ENCODE measurements at regions of chr13 and their contacts with region 1.

Region 1: DNA sequence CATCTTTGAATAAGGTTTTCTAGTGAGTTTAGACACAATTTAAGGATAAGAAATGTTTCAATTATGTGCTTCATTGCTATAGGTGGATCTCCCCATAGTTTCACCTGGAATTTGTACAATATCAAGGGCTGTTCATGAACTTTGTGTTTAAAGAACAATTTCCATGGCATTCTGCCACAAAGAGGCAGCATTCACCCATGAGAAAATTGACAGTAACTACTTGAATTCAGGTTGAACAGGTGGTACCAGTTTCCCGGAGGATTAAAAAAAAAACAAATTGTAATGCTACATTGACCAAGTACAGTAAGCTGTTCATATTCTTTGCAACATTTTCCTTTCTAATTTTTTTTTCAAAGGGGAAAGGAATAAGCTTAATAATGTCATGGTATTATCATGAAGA is 9.1 kb downstream of the SLITRK5 start:
- DNase-seq: peak; percentile 76
- ATAC-seq: no peak; the same call in 1 of the 2 replicates
- H3K4me3 ChIP-seq: no peak overlapping the region
- H3K27ac ChIP-seq: no peak overlapping the region
- H3K4me1 ChIP-seq: peaks cover 12% of the 10 kb centered on the region
- H3K27me3 ChIP-seq: no peaks in the 10 kb centered on the region
- CTCF ChIP-seq: peak; percentile 56

Region 2: DNA sequence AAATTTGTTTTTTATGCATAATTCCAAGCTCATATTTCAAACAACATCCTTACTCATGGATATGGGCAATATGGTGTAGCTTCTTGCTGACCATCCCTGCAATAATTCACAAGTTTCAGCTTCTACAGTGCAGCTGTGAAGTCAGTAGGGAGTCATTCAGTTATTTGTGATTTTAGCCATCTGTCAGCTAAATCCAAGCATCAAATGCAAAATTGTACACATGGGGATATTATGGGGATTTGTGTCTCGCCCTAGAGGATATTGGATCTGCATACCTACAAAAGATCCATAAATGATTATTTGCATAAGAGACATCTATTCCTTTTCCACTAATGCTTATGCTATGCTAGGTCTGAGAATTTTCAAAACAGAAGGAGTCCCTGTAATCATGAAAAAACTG is 227.1 kb before region 1 on chr13:
- CTCF ChIA-PET with region 1: no interaction called
- POLR2A ChIA-PET with region 1: no interaction called
- intact Hi-C with region 1: no loop called
- DNase-seq: no peak
- ATAC-seq: no peak
- H3K4me3 ChIP-seq: no peak overlapping the region
- H3K27ac ChIP-seq: no peak overlapping the region
- H3K4me1 ChIP-seq: no peaks in the 10 kb centered on the region
- H3K27me3 ChIP-seq: no peaks in the 10 kb centered on the region
- CTCF ChIP-seq: no peak

Region 3: DNA sequence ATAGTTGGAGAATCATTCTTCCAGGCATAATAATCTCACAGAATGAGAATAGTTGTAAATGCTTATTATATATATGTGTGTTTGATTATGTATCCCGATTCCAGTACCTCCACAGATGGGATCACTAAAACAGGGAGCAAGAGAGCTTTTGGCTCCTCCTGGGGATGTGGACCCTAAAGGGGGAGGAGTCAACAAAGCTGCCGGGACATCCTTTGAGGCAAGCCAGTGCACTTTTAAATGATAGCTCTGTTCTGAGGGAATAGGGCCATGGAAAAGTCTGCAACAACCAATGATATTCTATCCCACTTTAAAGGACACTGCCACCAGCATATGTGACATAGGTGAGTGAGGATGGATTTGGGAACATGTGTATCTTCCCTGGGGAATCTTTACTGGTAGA is 31.7 kb after region 1 on chr13:
- CTCF ChIA-PET with region 1: no interaction called
- POLR2A ChIA-PET with region 1: no interaction called
- intact Hi-C with region 1: no loop called
- DNase-seq: no peak
- ATAC-seq: no peak
- H3K4me3 ChIP-seq: no peak overlapping the region
- H3K27ac ChIP-seq: no peak overlapping the region
- H3K4me1 ChIP-seq: no peaks in the 10 kb centered on the region
- H3K27me3 ChIP-seq: no peaks in the 10 kb centered on the region
- CTCF ChIP-seq: no peak

Region 4: GRCh38 chr13:87999791-88000190 is 319.5 kb after region 1 on chr13:
- CTCF ChIA-PET with region 1: no interaction called
- POLR2A ChIA-PET with region 1: no interaction called
- intact Hi-C with region 1: loop called (anchors 10 kb)
- DNase-seq: no peak
- ATAC-seq: peak; percentile 31; the same call in 1 of the 2 replicates
- H3K4me3 ChIP-seq: no peak overlapping the region
- H3K27ac ChIP-seq: no peak overlapping the region
- H3K4me1 ChIP-seq: no peaks in the 10 kb centered on the region
- H3K27me3 ChIP-seq: no peaks in the 10 kb centered on the region
- CTCF ChIP-seq: no peak

Region 5: DNA sequence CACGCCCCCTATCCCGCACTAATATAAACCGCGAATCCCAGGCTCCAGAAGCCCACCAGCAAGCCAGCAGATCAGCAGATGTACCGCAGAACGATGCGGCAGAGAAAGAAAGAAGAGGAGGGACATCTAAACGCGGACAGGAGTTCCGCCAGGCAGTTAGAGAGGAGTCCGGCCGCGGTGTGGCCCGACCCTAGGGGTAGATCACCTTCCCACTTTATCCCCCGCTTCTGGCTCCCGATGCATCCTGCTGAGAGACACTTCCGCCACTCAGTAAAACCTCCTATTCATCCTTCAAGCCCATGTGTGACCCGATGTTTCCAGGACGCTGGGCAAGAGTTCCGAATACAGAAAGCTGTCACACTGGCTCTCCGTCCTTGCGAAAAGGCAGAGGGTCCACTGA is 1037.6 kb after region 1 on chr13:
- CTCF ChIA-PET with region 1: no interaction called
- POLR2A ChIA-PET with region 1: no interaction called
- intact Hi-C with region 1: no loop called
- DNase-seq: no peak
- ATAC-seq: no peak
- H3K4me3 ChIP-seq: no peak overlapping the region
- H3K27ac ChIP-seq: no peak overlapping the region
- H3K4me1 ChIP-seq: no peaks in the 10 kb centered on the region
- H3K27me3 ChIP-seq: no peaks in the 10 kb centered on the region
- CTCF ChIP-seq: no peak

Region 6: DNA sequence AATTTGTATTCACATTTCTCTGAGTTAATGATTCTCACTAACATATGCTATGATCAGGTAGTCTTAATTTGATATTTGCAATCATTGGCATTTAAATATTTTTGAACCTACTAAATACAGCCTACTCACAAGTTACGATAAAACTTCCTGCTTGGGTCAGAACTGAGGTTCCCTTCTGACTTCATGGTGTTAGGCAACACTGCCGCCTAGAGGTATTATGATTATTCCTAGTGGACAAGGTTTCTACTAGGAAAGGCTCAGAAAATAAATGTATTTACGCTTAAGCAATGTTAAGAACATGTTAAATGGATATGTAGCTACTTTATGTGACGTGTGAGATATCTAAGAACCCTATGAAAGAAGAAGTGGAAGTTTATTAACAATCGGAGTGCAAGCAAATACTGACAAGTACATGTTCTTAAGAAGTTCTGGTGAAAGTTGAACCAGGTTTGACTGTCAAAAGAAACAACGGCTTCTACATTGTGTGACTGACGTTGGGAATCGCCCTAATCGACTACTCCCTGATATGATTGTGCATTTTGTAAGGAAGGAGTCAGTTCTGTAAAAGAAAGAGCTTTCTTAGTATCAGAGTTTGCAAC is 1386.7 kb after region 1 on chr13:
- CTCF ChIA-PET with region 1: no interaction called
- POLR2A ChIA-PET with region 1: no interaction called
- intact Hi-C with region 1: loop called (anchors 5 kb)
- DNase-seq: peak; percentile 68
- ATAC-seq: peak; percentile 66
- H3K4me3 ChIP-seq: no peak overlapping the region
- H3K27ac ChIP-seq: no peak overlapping the region
- H3K4me1 ChIP-seq: no peaks in the 10 kb centered on the region
- H3K27me3 ChIP-seq: no peaks in the 10 kb centered on the region
- CTCF ChIP-seq: peak; percentile 72

Measured in PC-3 (cell line).